K562 (cell line): ENCODE measurements at regions of chr6 and their contacts with region 1.

Region 1: DNA sequence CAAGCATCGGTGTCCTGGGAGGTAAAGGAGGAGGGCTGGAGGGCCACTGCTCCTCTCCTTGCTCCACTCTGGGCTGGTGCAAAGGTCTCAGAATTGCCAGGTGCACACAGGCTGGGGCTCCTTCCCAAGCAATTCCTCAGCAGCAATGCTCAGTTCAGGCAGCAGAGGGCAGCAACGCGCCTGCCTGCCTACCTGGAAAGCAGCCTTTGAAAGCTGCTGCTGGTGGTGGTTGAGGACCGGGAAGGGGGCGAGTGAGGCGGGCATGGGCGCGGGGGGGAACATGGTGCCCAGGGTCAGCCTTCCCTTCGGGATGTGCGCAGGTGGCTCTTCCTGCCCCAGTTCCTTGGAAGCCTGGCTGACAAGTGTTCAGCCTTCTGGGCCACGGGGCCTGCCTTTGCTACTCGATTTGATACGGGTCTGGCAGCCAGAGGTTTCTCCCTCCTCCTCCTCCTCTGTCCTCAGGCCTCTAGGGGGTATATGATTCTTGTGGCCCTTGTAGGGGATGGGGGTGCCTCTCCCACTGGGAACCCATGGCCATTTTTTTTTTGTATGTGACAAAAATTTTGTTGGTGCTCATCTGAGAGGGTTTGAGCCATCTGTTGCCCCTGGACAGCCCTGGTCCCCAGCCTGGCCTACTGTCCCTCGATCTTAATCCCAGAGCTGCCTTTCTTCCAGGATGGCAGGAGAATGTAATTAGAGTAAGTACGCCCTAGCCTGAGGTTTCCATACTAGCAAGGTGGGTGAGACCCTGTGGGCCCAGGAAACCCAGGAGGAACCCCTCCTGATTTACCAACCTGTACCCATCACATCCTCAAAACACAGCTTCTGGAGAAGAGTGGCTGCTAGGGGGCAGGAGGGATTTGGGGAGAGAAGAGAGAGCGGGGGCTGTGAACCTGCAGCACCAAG is 20.1 kb downstream of the MRPS18A start:
- DNase-seq: peak; percentile 84 to 91 (median 85)
- ATAC-seq: peak; percentile 80
- H3K4me3 ChIP-seq: no peak overlapping the region
- H3K27ac ChIP-seq: no peak overlapping the region
- H3K4me1 ChIP-seq: peaks cover 37 to 42% of the 10 kb centered on the region in 2 experiments
- H3K27me3 ChIP-seq: no peaks in the 10 kb centered on the region; a peak in 1 of 5 replicates
- CTCF ChIP-seq: peak; percentile 96 to 99 (median 97)
- EP300 ChIP-seq: no peak
- POLR2A ChIP-seq: 0 out of 2 replicates have a peak, but pooled peaks have one; percentile 1
- RAD21 ChIP-seq: peak; percentile 92 to 96

Region 2: DNA sequence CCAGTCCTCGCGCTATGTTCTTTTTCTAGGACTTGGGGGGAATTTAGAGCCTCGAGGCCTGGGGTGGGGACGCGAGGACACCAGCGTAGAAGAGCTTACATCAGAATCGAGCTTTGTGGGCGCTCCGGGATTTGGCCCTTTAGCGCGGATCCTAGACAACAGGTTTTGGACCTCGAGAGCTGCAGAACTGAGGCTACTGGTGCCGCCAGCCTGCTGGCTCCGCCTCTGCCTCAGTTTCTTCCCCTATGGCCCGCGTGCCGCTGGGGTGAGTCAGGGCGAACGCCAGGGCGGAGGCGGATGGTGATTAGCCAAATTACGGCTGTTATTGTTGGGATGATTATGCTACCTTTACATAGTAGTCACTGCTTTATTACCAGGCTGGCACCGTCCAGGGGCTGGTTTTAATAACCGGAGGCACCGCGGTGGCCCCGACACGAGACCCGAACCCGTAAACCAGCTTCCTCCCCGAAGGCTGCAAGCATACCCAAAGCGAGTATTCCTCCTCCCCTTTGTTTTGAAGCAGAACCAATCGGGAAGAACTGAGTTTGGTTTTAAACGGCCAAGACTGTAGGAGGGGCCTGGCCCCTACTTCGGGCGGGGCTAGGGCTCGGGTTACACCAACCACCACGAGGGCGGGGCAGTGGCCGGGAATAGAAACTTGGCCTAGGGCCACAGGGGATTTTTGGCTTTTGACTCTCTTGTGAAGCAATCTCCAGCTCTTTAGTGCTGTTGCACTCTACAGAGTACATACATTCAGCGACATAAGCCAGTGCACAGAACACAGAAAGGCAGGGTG is 37.8 kb before region 1 on chr6:
- CTCF ChIA-PET with region 1: no interaction called
- POLR2A ChIA-PET with region 1: interaction called, 41 read pairs
- in situ Hi-C with region 1: no loop called
- intact Hi-C with region 1: loop called (anchors 5 kb)
- DNase-seq: peak; percentile 92 to 99 (median 96)
- ATAC-seq: peak; percentile 75
- H3K4me3 ChIP-seq: peak overlapping the region; percentile 58
- H3K27ac ChIP-seq: peak overlapping the region; percentile 97
- H3K4me1 ChIP-seq: peaks cover 40 to 59% of the 10 kb centered on the region in 2 experiments
- H3K27me3 ChIP-seq: no peaks in the 10 kb centered on the region; a peak in 1 of 5 replicates
- CTCF ChIP-seq: no peak
- EP300 ChIP-seq: peak; percentile 53; the same call in 1 of the 2 replicates
- POLR2A ChIP-seq: peak; percentile 97
- RAD21 ChIP-seq: peak in 1 of 2 experiments; percentile 5; a peak in 2 of 4 replicates

Region 3: GRCh38 chr6:43679057-43679456 is 11.6 kb after region 1 on chr6:
- CTCF ChIA-PET with region 1: no interaction called
- POLR2A ChIA-PET with region 1: interaction called, 32 read pairs
- in situ Hi-C with region 1: no loop called
- intact Hi-C with region 1: no loop called
- DNase-seq: no peak
- ATAC-seq: no peak
- H3K4me3 ChIP-seq: no peak overlapping the region
- H3K27ac ChIP-seq: no peak overlapping the region
- H3K4me1 ChIP-seq: peaks cover 0 to 23% of the 10 kb centered on the region in 2 experiments; a peak in 3 of 5 replicates
- H3K27me3 ChIP-seq: no peaks in the 10 kb centered on the region
- CTCF ChIP-seq: no peak
- EP300 ChIP-seq: no peak
- POLR2A ChIP-seq: no peak
- RAD21 ChIP-seq: no peak

Region 4: DNA sequence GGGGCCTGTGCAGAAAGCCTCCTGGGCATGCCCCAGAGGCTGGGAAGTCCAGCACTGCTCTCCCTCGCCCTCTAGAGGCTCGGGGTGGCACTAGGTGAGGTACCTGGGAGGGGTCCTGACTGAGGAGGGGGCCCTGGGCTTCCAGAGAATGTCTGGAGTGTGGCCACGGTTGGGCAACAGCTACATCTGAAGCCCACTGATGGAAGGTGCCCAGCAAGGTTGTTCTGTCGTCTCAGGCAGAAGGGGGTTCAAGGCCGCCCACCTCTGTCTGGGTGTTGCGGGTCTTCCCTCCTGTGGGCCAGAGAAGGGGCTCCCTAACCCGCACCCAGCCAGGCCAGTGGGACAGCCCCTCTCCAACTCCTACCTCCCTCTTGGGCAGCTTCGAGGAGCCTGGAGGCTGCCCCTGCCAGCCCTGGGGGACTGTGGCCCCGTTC is 91.1 kb after region 1 on chr6:
- CTCF ChIA-PET with region 1: no interaction called
- POLR2A ChIA-PET with region 1: interaction called, 3 read pairs
- in situ Hi-C with region 1: no loop called
- intact Hi-C with region 1: loop called (anchors 1 kb)
- DNase-seq: peak; percentile 57 to 79 (median 77)
- ATAC-seq: peak; percentile 91
- H3K4me3 ChIP-seq: no peak overlapping the region
- H3K27ac ChIP-seq: no peak overlapping the region
- H3K4me1 ChIP-seq: peaks cover 6 to 10% of the 10 kb centered on the region in 2 experiments; a peak in 3 of 5 replicates
- H3K27me3 ChIP-seq: peaks cover 10 to 31% of the 10 kb centered on the region in 2 experiments; a peak in 4 of 5 replicates
- CTCF ChIP-seq: peak; percentile 80 to 94 (median 85)
- EP300 ChIP-seq: no peak
- POLR2A ChIP-seq: no peak
- RAD21 ChIP-seq: peak; percentile 73 to 81

Region 5: DNA sequence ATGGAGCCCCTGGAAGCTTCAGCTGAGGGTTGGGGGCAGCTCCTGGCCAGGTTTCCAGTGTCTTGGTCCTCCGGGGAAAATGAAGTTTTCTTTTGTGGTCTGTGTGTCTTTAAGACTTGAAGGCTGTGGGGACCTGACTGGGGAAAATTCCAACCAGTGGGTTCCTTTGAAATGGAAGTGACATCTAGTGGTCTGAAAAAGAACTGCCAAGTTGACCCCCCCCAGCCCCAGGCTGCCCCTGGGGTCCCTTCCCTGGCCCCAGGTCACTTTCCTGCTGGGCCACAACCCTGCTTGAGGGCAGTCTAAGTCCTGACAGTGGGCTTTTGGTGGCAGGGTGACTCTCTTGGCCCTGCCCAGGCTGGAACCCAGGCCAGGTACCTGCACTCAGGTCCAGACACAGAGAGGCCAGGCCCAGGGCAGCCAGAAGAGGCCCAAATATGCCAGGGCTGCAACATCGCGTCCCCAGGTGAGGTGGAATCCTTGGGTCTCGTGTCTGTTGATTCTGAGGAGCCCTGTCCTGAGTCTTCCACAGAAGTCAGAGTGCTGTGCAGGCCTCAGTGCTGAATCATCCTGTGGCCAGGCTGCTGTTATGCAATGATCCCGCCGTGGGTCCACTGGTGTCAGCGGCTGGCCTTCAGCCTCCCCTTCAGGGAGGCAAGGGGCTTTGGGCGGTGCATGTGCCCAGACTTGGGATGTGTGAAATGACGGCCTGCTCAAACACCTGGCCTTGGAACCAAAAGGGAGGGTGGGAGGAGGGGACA is 171.0 kb after region 1 on chr6:
- CTCF ChIA-PET with region 1: no interaction called
- POLR2A ChIA-PET with region 1: interaction called, 3 read pairs
- in situ Hi-C with region 1: no loop called
- intact Hi-C with region 1: loop called (anchors 10 kb)
- DNase-seq: peak; percentile 73 to 84 (median 78)
- ATAC-seq: peak; percentile 87
- H3K4me3 ChIP-seq: no peak overlapping the region
- H3K27ac ChIP-seq: peak overlapping the region; percentile 44; the same call in 2 of the 3 replicates
- H3K4me1 ChIP-seq: peaks cover 30 to 38% of the 10 kb centered on the region in 2 experiments
- H3K27me3 ChIP-seq: peaks cover 5 to 12% of the 10 kb centered on the region in 2 experiments; a peak in 4 of 5 replicates
- CTCF ChIP-seq: peak; percentile 73 to 88 (median 81)
- EP300 ChIP-seq: 0 out of 2 replicates have a peak, but pooled peaks have one; percentile 28
- POLR2A ChIP-seq: no peak
- RAD21 ChIP-seq: peak; percentile 66 to 76